ENCODE measurements at regions of chr2 and their contacts with region 1.

Region 1: GRCh38 chr2:172588931-172589330 is 33.0 kb downstream of the PDK1 start:
- DNase-seq: no peak
- H3K4me3 ChIP-seq: no peak overlapping the region
- H3K27ac ChIP-seq: no peak overlapping the region
- H3K4me1 ChIP-seq: no peaks in the 10 kb centered on the region
- CTCF ChIP-seq: no peak

Region 2: GRCh38 chr2:172561270-172561669 is 27.7 kb before region 1 on chr2:
- CTCF ChIA-PET with region 1: no interaction called
- POLR2A ChIA-PET with region 1: no interaction called
- intact Hi-C with region 1: no loop called
- DNase-seq: no peak
- H3K4me3 ChIP-seq: no peak overlapping the region
- H3K27ac ChIP-seq: no peak overlapping the region
- H3K4me1 ChIP-seq: peaks cover 19% of the 10 kb centered on the region
- CTCF ChIP-seq: no peak

Region 3: GRCh38 chr2:172710584-172711024 is 121.7 kb after region 1 on chr2:
- CTCF ChIA-PET with region 1: no interaction called
- POLR2A ChIA-PET with region 1: no interaction called
- intact Hi-C with region 1: loop called (anchors 1 kb)
- DNase-seq: peak; percentile 34
- H3K4me3 ChIP-seq: no peak overlapping the region
- H3K27ac ChIP-seq: no peak overlapping the region
- H3K4me1 ChIP-seq: no peaks in the 10 kb centered on the region
- CTCF ChIP-seq: peak; percentile 83

Measured in OCI-LY7 (cell line).